Right ventricle myocardium superior (tissue), 1 donor: ENCODE measurements at regions of chr7 and their contacts with region 1.

Region 1: GRCh38 chr7:134432296-134433152 is 26.4 kb downstream of the AKR1B1 start:
- DNase-seq: peak; percentile 92
- ATAC-seq: peak; percentile 98

Region 2: GRCh38 chr7:134514663-134515062 is 82.1 kb after region 1 on chr7:
- intact Hi-C with region 1: loop called (anchors 2 kb)
- DNase-seq: no peak
- ATAC-seq: peak; percentile 62

Region 3: DNA sequence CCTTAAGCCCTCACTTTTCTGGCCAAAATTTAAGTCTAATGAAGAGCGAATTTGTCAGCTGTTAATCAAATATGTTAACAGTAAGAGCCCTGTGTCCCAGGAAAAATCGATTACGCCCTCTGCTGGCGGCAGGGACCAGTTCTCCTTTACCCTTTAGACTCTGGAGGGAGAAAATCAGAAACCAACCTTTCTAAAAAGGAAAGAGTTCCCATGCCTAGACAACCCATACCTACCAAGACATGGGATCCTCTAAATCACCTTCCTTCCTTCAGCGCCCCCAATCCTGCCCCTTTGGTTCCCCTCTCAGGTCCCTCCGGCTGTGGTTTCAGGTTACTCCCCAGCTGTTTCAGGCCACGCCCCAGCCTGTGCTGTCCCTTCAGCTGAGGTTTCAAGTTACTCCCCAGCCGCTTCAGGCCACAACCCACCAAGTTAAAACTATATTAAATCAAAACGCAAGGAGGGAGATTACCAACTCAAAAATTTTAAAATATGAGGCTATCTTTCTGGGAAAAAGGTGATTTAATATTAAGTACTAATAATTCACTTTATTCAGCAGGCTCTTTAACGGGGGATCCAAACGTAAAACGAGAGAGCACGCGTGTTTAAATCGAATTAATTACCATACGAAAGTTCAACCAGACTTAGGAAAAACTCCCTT is 115.0 kb after region 1 on chr7:
- intact Hi-C with region 1: loop called (anchors 10 kb)
- DNase-seq: peak; percentile 80
- ATAC-seq: peak; percentile 97